ENCODE measurements at regions of chr3 and their contacts with region 1.

Region 1: DNA sequence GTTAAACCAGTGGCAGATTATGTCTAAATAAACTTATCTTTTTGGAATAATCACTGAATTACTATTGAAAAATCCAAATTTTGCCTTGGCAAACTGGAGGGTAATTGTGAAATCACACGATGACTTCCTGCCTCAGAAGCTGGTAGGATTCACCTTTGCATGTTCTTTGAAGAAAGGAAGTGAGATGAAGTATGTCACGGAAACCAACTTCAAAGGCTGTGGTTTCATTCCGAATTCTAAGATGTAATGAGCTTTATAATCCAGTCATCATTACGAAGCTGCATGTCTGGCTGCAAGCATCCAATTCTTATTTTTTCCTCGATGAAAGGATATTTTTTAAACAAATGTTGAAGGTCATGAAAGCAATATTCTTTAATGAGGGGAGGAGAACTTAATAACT is 15.0 kb upstream of the ZBED2 start:
- DNase-seq: peak in 6 of 14 experiments; percentile 16 to 94 (median 68)
- ATAC-seq: peak; percentile 88
- H3K4me3 ChIP-seq: no peak overlapping the region
- H3K4me3 Mint-ChIP-seq: peak overlapping the region; percentile 54
- H3K27ac ChIP-seq: peak overlapping the region; percentile 43 to 58
- H3K27ac Mint-ChIP-seq: peak overlapping the region; percentile 88
- H3K4me1 ChIP-seq: peaks cover 23% of the 10 kb centered on the region
- H3K4me1 Mint-ChIP-seq: peaks cover 64% of the 10 kb centered on the region
- H3K27me3 ChIP-seq: no peaks in the 10 kb centered on the region
- H3K27me3 Mint-ChIP-seq: no peaks in the 10 kb centered on the region
- CTCF ChIP-seq: no peak

Region 2: GRCh38 chr3:111071257-111072015 is 538.8 kb before region 1 on chr3 and contains the start of gene NECTIN3:
- CTCF ChIA-PET with region 1: no interaction called
- POLR2A ChIA-PET with region 1: no interaction called
- intact Hi-C with region 1: loop called in 1 of 2 experiments (anchors 2 kb)
- DNase-seq: peak; percentile 71 to 95 (median 83)
- ATAC-seq: peak; percentile 93
- H3K4me3 ChIP-seq: peak within 1 kb of the TSS; percentile 78
- H3K4me3 Mint-ChIP-seq: peak within 1 kb of the TSS; percentile 97
- H3K27ac ChIP-seq: no peak within 1 kb of the TSS
- H3K27ac Mint-ChIP-seq: peak within 1 kb of the TSS; percentile 90
- H3K4me1 ChIP-seq: peaks cover 19% of the 10 kb centered on the region
- H3K4me1 Mint-ChIP-seq: peaks cover 44% of the 10 kb centered on the region
- H3K27me3 ChIP-seq: peaks cover 0 to 18% of the 10 kb centered on the region in 2 experiments
- H3K27me3 Mint-ChIP-seq: peaks cover 35% of the 10 kb centered on the region
- CTCF ChIP-seq: no peak
- total RNA-seq, gene NECTIN3: 7.8 to 8.5 TPM

Region 3: GRCh38 chr3:111547631-111548030 is 62.6 kb before region 1 on chr3:
- CTCF ChIA-PET with region 1: no interaction called
- POLR2A ChIA-PET with region 1: interaction called, 11 read pairs
- intact Hi-C with region 1: loop called (anchors 1 to 5 kb)
- DNase-seq: peak in 12 of 14 experiments; percentile 12 to 82 (median 35)
- ATAC-seq: peak; percentile 82
- H3K4me3 ChIP-seq: peak overlapping the region; percentile 40
- H3K4me3 Mint-ChIP-seq: no peak overlapping the region
- H3K27ac ChIP-seq: peak overlapping the region; percentile 69 to 81
- H3K27ac Mint-ChIP-seq: no peak overlapping the region
- H3K4me1 ChIP-seq: peaks cover 54% of the 10 kb centered on the region
- H3K4me1 Mint-ChIP-seq: no peaks in the 10 kb centered on the region
- H3K27me3 ChIP-seq: no peaks in the 10 kb centered on the region
- H3K27me3 Mint-ChIP-seq: no peaks in the 10 kb centered on the region
- CTCF ChIP-seq: no peak

Region 4: DNA sequence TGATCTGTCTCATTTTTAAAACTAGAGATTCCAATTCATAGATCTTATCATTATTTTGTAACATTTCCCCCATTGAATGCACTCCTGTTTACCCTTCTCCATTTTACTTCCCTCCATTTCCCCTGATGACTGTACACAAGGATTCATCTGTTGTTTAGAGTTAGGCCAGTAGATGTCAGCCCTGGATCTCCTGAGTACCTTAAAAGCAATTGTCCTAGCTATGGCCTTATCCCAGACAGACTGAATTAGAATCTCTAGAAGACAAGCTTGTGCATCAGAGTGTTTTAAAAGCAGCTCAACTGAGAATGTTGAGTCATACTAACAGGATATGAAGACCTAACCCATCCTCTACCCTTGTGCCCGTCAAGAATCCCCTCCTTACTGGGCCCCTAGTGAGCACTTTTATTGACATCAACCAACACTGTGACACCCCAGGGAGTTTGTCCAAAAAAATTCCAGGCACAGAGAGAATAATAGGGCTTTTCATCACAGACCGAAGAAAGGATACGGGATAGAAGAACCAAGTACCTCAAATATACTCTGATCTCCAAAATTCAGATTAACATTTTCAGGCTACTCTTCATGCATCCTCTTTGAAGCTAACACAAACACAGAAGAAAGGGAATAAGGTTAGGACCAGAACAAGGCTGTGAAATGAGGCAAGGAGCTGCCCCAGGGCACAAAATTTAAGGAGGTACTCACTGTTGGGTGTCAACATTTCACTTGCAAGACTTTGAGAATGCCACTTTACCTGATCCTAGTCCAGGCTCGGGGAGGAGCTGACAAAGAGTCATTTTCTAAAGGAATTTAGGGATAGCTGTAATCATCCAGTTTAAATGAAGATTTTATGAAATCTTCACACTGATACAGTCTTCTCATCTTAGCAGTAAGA is 32.1 kb before region 1 on chr3:
- CTCF ChIA-PET with region 1: interaction called, 33 read pairs
- POLR2A ChIA-PET with region 1: no interaction called
- intact Hi-C with region 1: no loop called
- DNase-seq: peak in 3 of 14 experiments; percentile 48 to 58 (median 50)
- ATAC-seq: peak; percentile 85
- H3K4me3 ChIP-seq: no peak overlapping the region
- H3K4me3 Mint-ChIP-seq: no peak overlapping the region
- H3K27ac ChIP-seq: no peak overlapping the region
- H3K27ac Mint-ChIP-seq: peak overlapping the region; percentile 24
- H3K4me1 ChIP-seq: no peaks in the 10 kb centered on the region
- H3K4me1 Mint-ChIP-seq: peaks cover 75% of the 10 kb centered on the region
- H3K27me3 ChIP-seq: no peaks in the 10 kb centered on the region
- H3K27me3 Mint-ChIP-seq: no peaks in the 10 kb centered on the region
- CTCF ChIP-seq: peak; percentile 17

Measured in CD4-positive, alpha-beta T cell (primary cell).